ENCODE measurements at regions of chr5 and their contacts with region 1.

Region 1: GRCh38 chr5:4058899-4059298 is 463.3 kb downstream of the IRX1 start:
- DNase-seq: peak in 1 of 2 donors; percentile 76
- H3K4me3 ChIP-seq: no peak overlapping the region
- H3K27ac ChIP-seq: peak overlapping the region in 1 of 2 donors; percentile 66
- H3K4me1 ChIP-seq: peaks cover 0 to 6% of the 10 kb centered on the region in 2 donors
- H3K27me3 ChIP-seq: no peaks in the 10 kb centered on the region
- CTCF ChIP-seq: peak in 1 of 3 experiments; percentile 4

Region 2: DNA sequence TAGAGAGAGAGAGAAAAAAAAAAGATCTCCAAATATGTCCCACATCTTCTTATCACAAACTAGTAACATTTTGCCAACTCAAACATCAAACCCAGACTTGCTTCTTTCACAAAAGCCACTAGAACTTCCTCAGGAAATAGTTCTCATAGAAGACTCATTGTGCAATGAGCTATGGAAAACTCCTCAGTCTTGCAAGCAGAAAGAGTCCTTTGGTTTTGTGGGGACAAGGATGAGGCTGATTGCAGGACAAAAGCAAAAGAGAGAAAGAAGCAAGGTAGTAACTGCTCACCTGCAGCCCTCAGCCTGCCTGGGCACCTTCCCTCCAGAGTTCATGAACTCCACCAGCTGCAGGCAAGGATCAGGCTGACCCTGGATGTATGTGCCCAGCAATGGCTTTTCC is 64.3 kb before region 1 on chr5:
- intact Hi-C with region 1: loop called (anchors 5 kb)
- DNase-seq: no peak
- H3K4me3 ChIP-seq: peak overlapping the region in 1 of 2 donors; percentile 31
- H3K27ac ChIP-seq: peak overlapping the region; percentile 73 to 79
- H3K4me1 ChIP-seq: peaks cover 0 to 25% of the 10 kb centered on the region in 2 donors
- H3K27me3 ChIP-seq: no peaks in the 10 kb centered on the region
- CTCF ChIP-seq: no peak

Region 3: GRCh38 chr5:4005335-4005734 is 53.6 kb before region 1 on chr5:
- intact Hi-C with region 1: no loop called
- DNase-seq: no peak
- H3K4me3 ChIP-seq: no peak overlapping the region
- H3K27ac ChIP-seq: no peak overlapping the region
- H3K4me1 ChIP-seq: no peaks in the 10 kb centered on the region
- H3K27me3 ChIP-seq: no peaks in the 10 kb centered on the region
- CTCF ChIP-seq: no peak